CD4-positive, alpha-beta T cell (primary cell): ENCODE measurements at regions of chr10 and their contacts with region 1.

Region 1: GRCh38 chr10:118241229-118242137 is 100.6 kb downstream of the FAM204A start:
- DNase-seq: peak; percentile 42 to 77 (median 54)
- ATAC-seq: no peak
- H3K4me3 ChIP-seq: no peak overlapping the region
- H3K4me3 Mint-ChIP-seq: no peak overlapping the region
- H3K27ac ChIP-seq: no peak overlapping the region
- H3K27ac Mint-ChIP-seq: no peak overlapping the region
- H3K4me1 ChIP-seq: no peaks in the 10 kb centered on the region
- H3K4me1 Mint-ChIP-seq: no peaks in the 10 kb centered on the region
- H3K27me3 ChIP-seq: peaks cover 15 to 24% of the 10 kb centered on the region in 2 experiments
- H3K27me3 Mint-ChIP-seq: peaks cover 77% of the 10 kb centered on the region
- CTCF ChIP-seq: peak; percentile 99

Region 2: GRCh38 chr10:117216611-117217195 is 1024.8 kb before region 1 on chr10:
- CTCF ChIA-PET with region 1: interaction called, 4 read pairs
- POLR2A ChIA-PET with region 1: no interaction called
- intact Hi-C with region 1: loop called (anchors 2 kb)
- DNase-seq: peak; percentile 37 to 86 (median 60)
- ATAC-seq: peak; percentile 87
- H3K4me3 ChIP-seq: peak overlapping the region; percentile 67
- H3K4me3 Mint-ChIP-seq: peak overlapping the region; percentile 75
- H3K27ac ChIP-seq: no peak overlapping the region
- H3K27ac Mint-ChIP-seq: no peak overlapping the region
- H3K4me1 ChIP-seq: peaks cover 15% of the 10 kb centered on the region
- H3K4me1 Mint-ChIP-seq: no peaks in the 10 kb centered on the region
- H3K27me3 ChIP-seq: peaks cover 18 to 23% of the 10 kb centered on the region in 2 experiments
- H3K27me3 Mint-ChIP-seq: peaks cover 57% of the 10 kb centered on the region
- CTCF ChIP-seq: peak; percentile 100

Region 3: DNA sequence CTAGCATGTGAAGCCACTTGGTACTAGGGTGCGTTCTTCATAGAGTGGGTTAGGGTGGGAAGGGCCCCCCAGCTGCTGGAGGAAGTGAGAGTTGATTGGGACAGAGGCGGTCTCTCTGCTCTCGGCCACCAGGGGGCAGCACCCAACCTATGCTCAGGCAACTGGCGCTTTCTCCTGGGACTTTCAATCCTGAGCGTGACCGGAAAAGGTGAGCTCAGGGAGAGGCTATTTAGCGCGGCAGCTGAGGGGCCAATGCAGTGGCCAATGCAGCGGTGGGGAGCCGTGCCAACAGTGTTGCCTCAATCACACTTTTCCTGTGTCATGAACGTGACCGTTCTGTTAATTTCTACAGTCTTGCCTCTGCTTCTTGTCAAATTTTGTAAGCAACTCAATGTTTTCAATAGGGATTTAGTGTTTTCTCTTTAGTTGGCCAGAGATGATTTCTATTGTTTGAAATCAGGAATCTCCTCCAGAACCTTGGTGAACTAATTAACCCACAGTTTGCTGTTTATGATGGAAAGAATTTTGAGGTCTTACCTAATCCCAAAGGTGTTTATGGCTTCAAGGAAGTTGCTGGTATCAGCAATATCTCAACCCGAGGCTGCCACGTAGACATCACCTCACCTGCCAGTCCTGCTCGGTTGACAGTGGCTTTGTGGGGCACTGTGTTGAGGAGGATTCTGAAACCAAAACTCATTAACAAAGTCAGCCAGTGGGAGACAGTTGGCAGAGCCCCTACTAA is 798.4 kb before region 1 on chr10:
- CTCF ChIA-PET with region 1: interaction called, 3 read pairs
- POLR2A ChIA-PET with region 1: no interaction called
- intact Hi-C with region 1: loop called (anchors 5 kb)
- DNase-seq: peak; percentile 9 to 70 (median 32)
- ATAC-seq: no peak
- H3K4me3 ChIP-seq: no peak overlapping the region
- H3K4me3 Mint-ChIP-seq: peak overlapping the region; percentile 74
- H3K27ac ChIP-seq: no peak overlapping the region
- H3K27ac Mint-ChIP-seq: no peak overlapping the region
- H3K4me1 ChIP-seq: peaks cover 3% of the 10 kb centered on the region
- H3K4me1 Mint-ChIP-seq: peaks cover 6% of the 10 kb centered on the region
- H3K27me3 ChIP-seq: peaks cover 5 to 12% of the 10 kb centered on the region in 2 experiments
- H3K27me3 Mint-ChIP-seq: peaks cover 50% of the 10 kb centered on the region
- CTCF ChIP-seq: peak; percentile 92

Region 4: GRCh38 chr10:117537436-117537903 is 704.0 kb before region 1 on chr10:
- CTCF ChIA-PET with region 1: interaction called, 3 read pairs
- POLR2A ChIA-PET with region 1: no interaction called
- intact Hi-C with region 1: loop called (anchors 1 kb)
- DNase-seq: peak in 4 of 14 experiments; percentile 4 to 38 (median 12)
- ATAC-seq: no peak
- H3K4me3 ChIP-seq: no peak overlapping the region
- H3K4me3 Mint-ChIP-seq: no peak overlapping the region
- H3K27ac ChIP-seq: no peak overlapping the region
- H3K27ac Mint-ChIP-seq: no peak overlapping the region
- H3K4me1 ChIP-seq: peaks cover 15% of the 10 kb centered on the region
- H3K4me1 Mint-ChIP-seq: peaks cover 8% of the 10 kb centered on the region
- H3K27me3 ChIP-seq: peaks cover 70 to 92% of the 10 kb centered on the region in 2 experiments
- H3K27me3 Mint-ChIP-seq: peaks cover 74% of the 10 kb centered on the region
- CTCF ChIP-seq: no peak